HepG2 (cell line): ENCODE measurements at regions of chr4 and their contacts with region 1.

Region 1: GRCh38 chr4:55866973-55867574 is 13.6 kb downstream of the EXOC1 start:
- DNase-seq: peak; percentile 65
- ATAC-seq: peak; percentile 85
- H3K4me3 ChIP-seq: no peak overlapping the region
- H3K27ac ChIP-seq: no peak overlapping the region
- H3K4me1 ChIP-seq: peaks cover 6% of the 10 kb centered on the region; the same call in 1 of the 2 replicates
- H3K27me3 ChIP-seq: no peaks in the 10 kb centered on the region
- CTCF ChIP-seq: peak; percentile 78
- EP300 ChIP-seq: no peak
- POLR2A ChIP-seq: no peak
- RAD21 ChIP-seq: peak; percentile 47; the same call in 1 of the 2 replicates

Region 2: GRCh38 chr4:55184600-55185523 is 682.2 kb before region 1 on chr4:
- CTCF ChIA-PET with region 1: interaction called, 4 read pairs
- POLR2A ChIA-PET with region 1: no interaction called
- in situ Hi-C with region 1: no loop called
- intact Hi-C with region 1: loop called (anchors 10 kb)
- DNase-seq: peak; percentile 35
- ATAC-seq: peak; percentile 84
- H3K4me3 ChIP-seq: no peak overlapping the region; a peak in 1 of 6 replicates
- H3K27ac ChIP-seq: no peak overlapping the region
- H3K4me1 ChIP-seq: no peaks in the 10 kb centered on the region
- H3K27me3 ChIP-seq: no peaks in the 10 kb centered on the region
- CTCF ChIP-seq: peak; percentile 59
- EP300 ChIP-seq: no peak
- POLR2A ChIP-seq: no peak
- RAD21 ChIP-seq: no peak

Region 3: DNA sequence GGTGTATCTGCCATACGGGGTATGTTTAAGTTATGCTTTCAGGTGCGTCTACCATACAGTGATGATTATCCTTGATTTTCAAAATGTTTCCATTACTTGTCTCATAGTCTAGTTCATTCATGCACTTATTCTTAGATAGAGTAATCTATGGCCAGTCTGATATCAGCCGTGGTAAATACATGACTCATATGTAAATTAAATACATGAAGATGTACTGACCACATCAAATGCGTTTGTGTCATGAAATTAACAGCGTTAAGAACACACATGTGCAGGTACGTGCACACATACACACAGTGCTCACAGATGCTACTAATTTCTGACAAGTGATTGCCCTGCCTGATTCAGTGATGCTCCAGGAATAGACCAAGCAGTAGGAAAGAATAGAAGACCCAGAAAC is 122.7 kb before region 1 on chr4:
- CTCF ChIA-PET with region 1: no interaction called
- POLR2A ChIA-PET with region 1: no interaction called
- in situ Hi-C with region 1: no loop called
- intact Hi-C with region 1: loop called (anchors 2 kb)
- DNase-seq: no peak
- ATAC-seq: no peak
- H3K4me3 ChIP-seq: no peak overlapping the region
- H3K27ac ChIP-seq: no peak overlapping the region
- H3K4me1 ChIP-seq: no peaks in the 10 kb centered on the region
- H3K27me3 ChIP-seq: peaks cover 0 to 6% of the 10 kb centered on the region in 2 experiments; a peak in 2 of 5 replicates
- CTCF ChIP-seq: no peak
- EP300 ChIP-seq: no peak
- POLR2A ChIP-seq: no peak
- RAD21 ChIP-seq: no peak